ENCODE measurements at regions of chr11 and their contacts with region 1.

Region 1: DNA sequence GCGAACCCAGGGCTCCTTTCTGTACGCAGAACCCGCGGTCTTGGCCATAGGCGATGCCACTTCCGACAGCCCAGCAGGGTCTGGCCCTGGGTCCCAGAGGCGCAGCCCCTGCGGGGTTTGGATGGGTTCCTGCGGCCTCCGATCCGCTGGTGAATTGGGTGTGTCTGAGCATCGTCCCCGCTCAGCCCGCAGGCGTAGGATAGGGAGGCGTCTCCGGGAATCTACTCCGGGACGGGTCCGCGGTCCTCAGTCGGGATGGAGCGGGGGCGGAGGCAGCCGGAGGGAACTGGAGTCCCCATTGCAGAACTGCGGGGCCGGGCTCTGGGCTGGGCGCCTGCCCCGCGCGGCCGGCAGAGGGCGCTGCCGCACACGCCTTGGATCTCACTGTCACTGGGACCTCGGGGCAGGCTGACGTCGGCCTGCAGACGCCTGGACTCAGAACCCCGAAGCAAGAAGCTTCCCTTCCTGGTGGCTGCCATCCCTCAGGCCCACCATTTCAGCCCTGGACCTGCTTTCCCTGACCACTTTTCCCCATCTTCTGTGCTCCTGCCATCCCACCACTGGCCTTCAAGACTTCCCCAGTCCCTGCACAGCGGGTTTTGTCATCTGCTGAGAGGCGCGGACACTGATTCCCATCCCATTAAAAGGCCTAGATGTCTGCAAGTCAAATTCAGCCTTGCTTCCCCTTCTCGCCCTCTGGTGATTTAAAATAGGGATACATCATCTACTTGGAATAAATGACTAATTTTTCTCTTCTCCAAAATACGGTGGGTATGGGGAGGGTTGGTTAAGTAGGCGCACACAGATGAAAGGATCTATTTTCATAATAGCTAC is 38.3 kb upstream of the CREB3L1 start:
- DNase-seq: peak; percentile 71 to 82 (median 74)
- H3K4me3 ChIP-seq: peak overlapping the region; percentile 57
- H3K4me3 Mint-ChIP-seq: peak overlapping the region; percentile 20 to 87 (median 72)
- H3K27ac ChIP-seq: peak overlapping the region; percentile 26
- H3K27ac Mint-ChIP-seq: peak overlapping the region in 1 of 8 donors; percentile 55
- H3K4me1 ChIP-seq: peaks cover 19% of the 10 kb centered on the region
- H3K4me1 Mint-ChIP-seq: peaks cover 28 to 40% (median 39%) of the 10 kb centered on the region in 3 donors
- H3K27me3 ChIP-seq: peaks cover 12% of the 10 kb centered on the region
- H3K27me3 Mint-ChIP-seq: peaks cover 8 to 32% of the 10 kb centered on the region in 2 donors

Region 2: DNA sequence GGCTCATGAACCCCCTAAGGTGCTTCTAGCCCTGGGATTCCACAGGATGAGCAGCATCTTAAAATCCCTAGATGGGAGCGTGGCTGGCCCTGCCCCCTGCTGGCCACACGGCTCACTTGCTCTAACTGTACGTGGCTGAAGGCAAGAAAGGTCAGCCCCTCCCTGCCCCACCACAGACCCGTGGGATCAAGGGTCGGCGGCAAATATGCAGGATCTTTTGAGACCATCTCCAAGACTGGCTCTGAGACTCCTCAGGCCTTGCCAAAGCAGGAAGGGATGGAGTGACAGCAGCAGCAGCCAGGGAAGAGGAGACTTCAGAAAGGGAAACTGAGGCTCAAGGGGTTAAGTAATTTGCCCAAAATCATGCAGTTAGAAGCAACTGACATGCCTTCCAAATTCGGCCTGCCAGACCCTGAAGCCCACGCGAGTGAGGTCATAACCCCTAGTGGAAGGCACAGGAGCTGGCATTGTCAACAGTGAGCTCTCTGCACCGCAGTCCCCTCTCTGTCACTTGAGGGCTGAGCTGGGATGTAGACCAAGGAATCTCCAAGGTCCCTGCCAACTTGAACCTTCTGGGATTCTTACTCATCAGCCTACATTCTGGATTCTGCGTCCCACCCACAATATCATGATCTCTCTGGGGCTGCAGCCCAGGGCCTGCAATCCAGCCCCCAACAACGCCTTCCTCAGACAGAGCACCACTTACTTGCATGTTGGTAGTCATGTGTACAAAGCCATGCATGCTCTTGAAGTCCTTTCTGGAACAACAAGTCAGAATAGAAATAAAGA is 69.6 kb after region 1 on chr11:
- CTCF ChIA-PET with region 1: interaction called, 205 read pairs
- POLR2A ChIA-PET with region 1: no interaction called
- DNase-seq: peak; percentile 36 to 73 (median 50)
- H3K4me3 ChIP-seq: no peak overlapping the region
- H3K4me3 Mint-ChIP-seq: no peak overlapping the region
- H3K27ac ChIP-seq: no peak overlapping the region
- H3K27ac Mint-ChIP-seq: no peak overlapping the region
- H3K4me1 ChIP-seq: peaks cover 4% of the 10 kb centered on the region
- H3K4me1 Mint-ChIP-seq: peaks cover 0 to 5% (median 5%) of the 10 kb centered on the region in 3 donors
- H3K27me3 ChIP-seq: no peaks in the 10 kb centered on the region
- H3K27me3 Mint-ChIP-seq: peaks cover 4 to 10% of the 10 kb centered on the region in 2 donors

Region 3: DNA sequence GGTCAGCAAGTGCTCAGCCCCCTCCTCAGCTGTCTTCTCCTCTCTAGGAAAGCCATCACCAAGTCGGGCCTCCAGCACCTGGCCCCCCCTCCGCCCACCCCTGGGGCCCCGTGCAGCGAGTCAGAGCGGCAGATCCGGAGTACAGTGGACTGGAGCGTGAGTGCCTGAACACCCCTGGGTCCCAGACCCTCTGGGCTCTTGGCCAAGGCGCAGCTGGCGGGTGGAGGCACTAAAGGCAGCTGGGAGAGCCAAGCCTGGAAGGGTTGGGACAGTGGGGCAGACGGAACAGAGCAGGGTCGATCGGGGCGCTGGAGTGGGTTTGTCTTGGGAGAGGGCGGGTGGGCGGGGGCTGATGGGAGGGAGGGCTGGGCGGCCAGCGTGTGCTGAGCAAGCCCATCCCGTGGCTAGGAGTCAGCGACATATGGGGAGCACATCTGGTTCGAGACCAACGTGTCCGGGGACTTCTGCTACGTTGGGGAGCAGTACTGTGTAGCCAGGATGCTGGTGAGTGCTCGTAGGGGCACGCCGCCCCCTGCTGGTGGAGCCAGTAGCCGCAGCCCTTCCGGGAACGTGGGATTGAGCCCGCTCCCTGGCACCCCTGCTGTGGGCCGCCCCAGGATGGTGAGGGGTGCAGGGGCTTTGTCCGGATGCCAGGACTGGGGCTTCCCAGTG is 128.2 kb after region 1 on chr11:
- CTCF ChIA-PET with region 1: interaction called, 18 read pairs
- POLR2A ChIA-PET with region 1: no interaction called
- DNase-seq: peak; percentile 67 to 83 (median 75)
- H3K4me3 ChIP-seq: no peak overlapping the region
- H3K4me3 Mint-ChIP-seq: peak overlapping the region in 2 of 7 donors; percentile 57 to 78
- H3K27ac ChIP-seq: no peak overlapping the region
- H3K27ac Mint-ChIP-seq: peak overlapping the region in 6 of 8 donors; percentile 19 to 80 (median 64)
- H3K4me1 ChIP-seq: peaks cover 33% of the 10 kb centered on the region
- H3K4me1 Mint-ChIP-seq: peaks cover 34 to 61% (median 35%) of the 10 kb centered on the region in 3 donors
- H3K27me3 ChIP-seq: no peaks in the 10 kb centered on the region
- H3K27me3 Mint-ChIP-seq: peaks cover 0 to 2% of the 10 kb centered on the region in 2 donors

Measured in CD8-positive, alpha-beta memory T cell (primary cell).